K562 (cell line): ENCODE measurements at regions of chr13 and their contacts with region 1.

Region 1: GRCh38 chr13:41054212-41054877 is 7.0 kb upstream of the WBP4 start:
- DNase-seq: peak in 2 of 4 experiments; percentile 24 to 68
- ATAC-seq: peak; percentile 57
- H3K4me3 ChIP-seq: no peak overlapping the region
- H3K27ac ChIP-seq: peak overlapping the region; percentile 24; the same call in 1 of the 3 replicates
- H3K4me1 ChIP-seq: peaks cover 8 to 40% of the 10 kb centered on the region in 2 experiments; a peak in 3 of 5 replicates
- H3K27me3 ChIP-seq: no peaks in the 10 kb centered on the region
- CTCF ChIP-seq: peak; percentile 37 to 56 (median 52); a peak in 4 of 6 replicates
- EP300 ChIP-seq: no peak
- POLR2A ChIP-seq: no peak
- RAD21 ChIP-seq: peak; percentile 31 to 53

Region 2: GRCh38 chr13:40974460-40975407 is 79.6 kb before region 1 on chr13:
- CTCF ChIA-PET with region 1: no interaction called
- POLR2A ChIA-PET with region 1: interaction called, 3 read pairs
- in situ Hi-C with region 1: no loop called
- intact Hi-C with region 1: loop called (anchors 2 kb)
- DNase-seq: peak; percentile 46 to 81 (median 58)
- ATAC-seq: peak; percentile 90
- H3K4me3 ChIP-seq: no peak overlapping the region
- H3K27ac ChIP-seq: peak overlapping the region; percentile 59
- H3K4me1 ChIP-seq: peaks cover 0 to 19% of the 10 kb centered on the region in 2 experiments; a peak in 3 of 5 replicates
- H3K27me3 ChIP-seq: no peaks in the 10 kb centered on the region
- CTCF ChIP-seq: peak; percentile 55 to 72 (median 71)
- EP300 ChIP-seq: peak; percentile 54; the same call in 1 of the 2 replicates
- POLR2A ChIP-seq: no peak
- RAD21 ChIP-seq: peak; percentile 40 to 51

Region 3: GRCh38 chr13:41222259-41222852 is 168.0 kb after region 1 on chr13:
- CTCF ChIA-PET with region 1: interaction called, 10 read pairs
- POLR2A ChIA-PET with region 1: no interaction called
- in situ Hi-C with region 1: no loop called
- intact Hi-C with region 1: loop called (anchors 1 kb)
- DNase-seq: peak; percentile 55 to 59 (median 58)
- ATAC-seq: peak; percentile 93
- H3K4me3 ChIP-seq: no peak overlapping the region
- H3K27ac ChIP-seq: no peak overlapping the region
- H3K4me1 ChIP-seq: 0 out of 5 replicates have a peak, but pooled peaks cover 0 to 2% of the 10 kb centered on the region in 2 experiments
- H3K27me3 ChIP-seq: no peaks in the 10 kb centered on the region
- CTCF ChIP-seq: peak; percentile 55 to 71 (median 63)
- EP300 ChIP-seq: no peak
- POLR2A ChIP-seq: no peak
- RAD21 ChIP-seq: peak; percentile 62 to 77